GM18951 (cell line): ENCODE measurements at regions of chr10 and their contacts with region 1.

Region 1: DNA sequence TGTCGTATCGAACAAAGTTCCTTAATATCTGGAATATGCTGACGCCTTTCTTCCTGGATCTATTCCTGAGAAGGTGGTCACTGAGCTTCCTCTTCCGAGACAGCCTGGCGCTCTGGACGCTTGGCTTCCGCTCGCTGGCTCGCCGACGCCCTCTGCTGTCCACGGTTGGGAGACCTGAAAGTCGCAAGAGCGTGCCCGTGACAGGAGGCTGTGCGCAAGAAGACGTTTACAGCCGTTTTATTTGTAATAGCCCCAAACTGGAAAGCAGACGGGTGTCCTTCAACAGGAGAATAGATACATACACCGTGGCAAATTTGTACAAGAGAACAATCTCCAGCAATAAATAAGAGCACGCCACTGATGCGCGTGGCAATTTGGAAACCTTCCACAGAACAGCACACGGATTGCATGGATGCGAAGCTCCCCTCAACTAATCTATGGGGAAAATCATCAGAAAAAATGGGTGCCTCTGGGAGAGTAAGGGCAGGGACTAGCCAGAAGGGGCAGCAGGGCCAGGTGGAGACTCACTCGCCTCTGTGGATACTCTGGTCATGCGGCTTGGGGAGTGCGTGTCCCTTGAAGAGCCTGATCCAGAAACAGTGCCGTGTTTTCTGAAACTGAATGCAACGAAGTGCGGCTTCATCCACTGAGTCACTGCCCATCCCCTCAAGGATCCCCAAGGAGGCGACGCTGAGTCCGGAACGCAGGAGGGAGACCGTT is 41.5 kb upstream of the BNIP3 start:
- POLR2A ChIP-seq: no peak

Region 2: GRCh38 chr10:131885391-131886161 is 137.7 kb before region 1 on chr10:
- in situ Hi-C with region 1: loop called (anchors 5 kb)
- POLR2A ChIP-seq: no peak